ENCODE measurements at regions of chr9 and their contacts with region 1.

Region 1: GRCh38 chr9:130128733-130129431 is 43.3 kb upstream of the NCS1 start:
- DNase-seq: peak; percentile 38
- H3K4me3 Mint-ChIP-seq: peak overlapping the region; percentile 82
- H3K27ac Mint-ChIP-seq: peak overlapping the region; percentile 100
- H3K4me1 Mint-ChIP-seq: peaks cover 43% of the 10 kb centered on the region
- H3K27me3 Mint-ChIP-seq: no peaks in the 10 kb centered on the region

Region 2: DNA sequence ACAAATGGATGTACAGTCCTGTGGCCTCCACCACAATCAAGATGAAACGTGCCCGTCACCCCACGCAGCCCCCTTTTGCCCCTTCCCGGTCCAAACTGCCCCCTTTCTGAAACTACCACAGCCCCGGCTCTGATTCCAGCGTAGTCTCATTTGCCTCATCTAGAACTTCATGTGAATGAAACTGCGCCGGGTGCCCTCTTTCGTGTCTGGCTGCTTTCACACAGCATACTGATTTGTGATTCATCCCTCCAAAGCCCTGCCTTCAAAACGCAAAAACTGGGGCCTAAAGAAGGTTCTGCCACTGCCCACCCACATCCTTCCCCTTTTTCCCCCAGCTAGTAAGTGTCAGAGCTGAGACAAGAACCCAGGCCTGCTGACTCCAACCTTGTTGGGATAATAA is 11.8 kb after region 1 on chr9:
- intact Hi-C with region 1: loop called (anchors 1 kb)
- DNase-seq: no peak
- H3K4me3 Mint-ChIP-seq: no peak overlapping the region
- H3K27ac Mint-ChIP-seq: peak overlapping the region; percentile 65
- H3K4me1 Mint-ChIP-seq: peaks cover 38% of the 10 kb centered on the region
- H3K27me3 Mint-ChIP-seq: peaks cover 18% of the 10 kb centered on the region

Region 3: DNA sequence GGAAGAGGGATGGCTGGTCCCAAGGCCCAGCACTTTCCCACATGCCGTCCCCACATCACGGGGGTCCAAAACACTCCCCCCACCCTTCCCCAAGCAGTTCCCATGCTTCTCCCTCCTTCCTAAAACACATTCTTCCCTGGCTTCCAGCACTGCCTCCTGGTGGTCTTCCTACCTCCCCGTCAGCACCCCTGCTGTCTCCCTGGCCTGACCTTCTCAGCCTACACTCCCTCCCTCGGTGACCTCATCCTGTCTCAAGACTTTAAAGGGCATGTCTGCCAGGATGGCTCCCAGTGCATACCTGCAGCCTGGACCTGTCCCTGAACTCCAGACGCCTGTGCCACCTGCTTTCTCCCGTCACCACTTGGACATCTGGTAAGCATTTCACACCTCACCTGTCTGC is 39.0 kb after region 1 on chr9:
- intact Hi-C with region 1: loop called (anchors 2 kb)
- DNase-seq: no peak
- H3K4me3 Mint-ChIP-seq: no peak overlapping the region
- H3K27ac Mint-ChIP-seq: no peak overlapping the region
- H3K4me1 Mint-ChIP-seq: peaks cover 7% of the 10 kb centered on the region
- H3K27me3 Mint-ChIP-seq: peaks cover 24% of the 10 kb centered on the region

Region 4: GRCh38 chr9:130235897-130236668 is 107.2 kb after region 1 on chr9:
- intact Hi-C with region 1: loop called (anchors 5 kb)
- DNase-seq: peak; percentile 49
- H3K4me3 Mint-ChIP-seq: no peak overlapping the region
- H3K27ac Mint-ChIP-seq: no peak overlapping the region
- H3K4me1 Mint-ChIP-seq: peaks cover 22% of the 10 kb centered on the region
- H3K27me3 Mint-ChIP-seq: peaks cover 2% of the 10 kb centered on the region